Spleen (tissue), 13 donors: ENCODE measurements at regions of chr1 and their contacts with region 1.

Region 1: DNA sequence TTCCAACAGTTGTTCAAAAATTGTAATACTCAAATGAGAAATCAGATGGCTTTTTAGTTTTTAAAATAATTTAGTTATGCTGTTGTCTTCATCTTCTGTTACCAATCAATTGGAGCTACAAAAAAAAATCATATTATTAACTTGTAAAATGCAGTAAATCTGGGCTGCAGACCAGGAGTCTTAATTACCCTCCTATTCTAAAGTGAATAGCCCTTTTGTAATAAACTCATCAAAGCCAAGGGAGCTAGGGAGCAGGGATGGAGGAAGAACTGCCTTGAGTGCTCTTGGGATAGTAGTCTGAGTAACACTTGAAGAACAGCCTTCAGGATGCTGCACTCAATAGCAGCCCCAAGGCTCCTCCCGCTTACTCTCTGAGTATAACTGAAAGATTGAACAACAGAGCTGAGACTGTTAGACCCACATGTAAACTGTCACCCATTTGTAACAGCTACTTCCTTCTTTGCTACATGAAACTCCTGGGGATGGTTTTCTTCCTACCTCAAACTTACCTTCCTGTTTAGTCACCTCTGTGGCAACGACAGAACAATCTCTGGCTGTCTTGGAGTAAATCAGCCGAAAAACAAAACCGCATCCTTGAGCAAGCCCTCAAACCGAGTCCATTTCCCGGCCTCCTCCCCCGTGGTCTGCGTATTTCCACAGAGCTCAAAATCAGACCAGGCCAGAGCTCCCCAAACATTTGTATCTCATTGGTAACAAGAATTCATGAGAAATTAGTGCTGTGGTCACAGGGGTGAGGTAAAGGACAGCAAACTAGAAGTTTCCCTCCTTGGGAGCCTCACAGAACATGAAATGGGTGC is 55.9 kb downstream of the CD58 start:
- DNase-seq: peak; percentile 85
- H3K4me3 ChIP-seq: peak overlapping the region in 1 of 8 donors; percentile 57
- H3K27ac ChIP-seq: peak overlapping the region; percentile 64 to 95 (median 92)
- H3K4me1 ChIP-seq: peaks cover 16 to 76% (median 32%) of the 10 kb centered on the region in 6 donors
- H3K27me3 ChIP-seq: no peaks in the 10 kb centered on the region
- CTCF ChIP-seq: peak in 1 of 11 experiments; percentile 6
- POLR2A ChIP-seq: no peak

Region 2: DNA sequence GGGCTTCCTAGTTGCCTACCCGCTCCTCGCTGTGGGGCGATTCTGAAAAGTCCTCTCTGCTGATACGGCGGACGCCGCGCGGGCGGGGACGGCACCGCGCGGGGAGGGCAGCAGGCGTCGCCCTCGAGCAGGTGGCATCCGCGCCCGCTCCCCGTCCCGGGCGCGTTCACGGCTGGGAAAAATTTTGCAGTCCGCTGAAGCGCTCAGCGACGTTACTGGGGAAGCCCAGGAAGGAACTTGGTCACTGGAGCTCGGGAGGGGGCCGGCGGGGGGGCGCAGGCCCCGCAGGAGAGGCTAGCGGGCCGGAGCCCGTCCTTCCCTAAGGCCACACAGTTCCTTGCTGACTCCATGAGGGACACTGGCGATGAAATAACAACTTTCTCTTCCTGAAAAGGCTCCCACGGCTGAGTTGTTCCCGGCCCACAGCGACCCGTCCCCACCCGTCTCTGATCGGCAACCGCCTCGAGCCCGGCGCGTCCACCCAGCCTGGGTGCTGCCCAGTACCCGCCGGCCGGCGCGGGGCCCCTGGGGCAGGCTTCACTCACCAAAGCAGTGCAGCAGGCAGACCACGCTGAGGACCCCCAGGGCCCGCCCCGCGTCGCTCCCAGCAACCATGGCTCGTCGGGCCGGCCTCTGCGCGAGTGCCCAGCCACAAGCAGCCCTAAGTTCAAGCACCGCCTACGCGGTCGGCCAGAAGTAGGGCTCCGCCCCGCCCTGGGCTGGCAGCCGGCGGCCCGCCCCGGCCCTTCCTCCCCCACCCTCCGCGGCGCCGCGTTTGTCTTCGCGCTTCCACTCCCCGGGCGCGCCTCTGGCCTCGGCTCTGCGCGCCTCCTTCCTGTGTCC is 55.7 kb after region 1 on chr1 and contains the start of gene CD58:
- intact Hi-C with region 1: loop called (anchors 10 kb)
- DNase-seq: peak; percentile 99
- H3K4me3 ChIP-seq: peak within 1 kb of the TSS; percentile 67 to 95 (median 78)
- H3K27ac ChIP-seq: peak within 1 kb of the TSS; percentile 92 to 99 (median 96)
- H3K4me1 ChIP-seq: peaks cover 22 to 87% (median 64%) of the 10 kb centered on the region in 6 donors
- H3K27me3 ChIP-seq: no peaks in the 10 kb centered on the region
- CTCF ChIP-seq: peak in 10 of 11 experiments; percentile 54 to 92 (median 81)
- POLR2A ChIP-seq: peak in 2 of 3 donors; percentile 51 to 79
- total RNA-seq, gene CD58: 25.5 to 52.1 (median 36.2) TPM

Region 3: DNA sequence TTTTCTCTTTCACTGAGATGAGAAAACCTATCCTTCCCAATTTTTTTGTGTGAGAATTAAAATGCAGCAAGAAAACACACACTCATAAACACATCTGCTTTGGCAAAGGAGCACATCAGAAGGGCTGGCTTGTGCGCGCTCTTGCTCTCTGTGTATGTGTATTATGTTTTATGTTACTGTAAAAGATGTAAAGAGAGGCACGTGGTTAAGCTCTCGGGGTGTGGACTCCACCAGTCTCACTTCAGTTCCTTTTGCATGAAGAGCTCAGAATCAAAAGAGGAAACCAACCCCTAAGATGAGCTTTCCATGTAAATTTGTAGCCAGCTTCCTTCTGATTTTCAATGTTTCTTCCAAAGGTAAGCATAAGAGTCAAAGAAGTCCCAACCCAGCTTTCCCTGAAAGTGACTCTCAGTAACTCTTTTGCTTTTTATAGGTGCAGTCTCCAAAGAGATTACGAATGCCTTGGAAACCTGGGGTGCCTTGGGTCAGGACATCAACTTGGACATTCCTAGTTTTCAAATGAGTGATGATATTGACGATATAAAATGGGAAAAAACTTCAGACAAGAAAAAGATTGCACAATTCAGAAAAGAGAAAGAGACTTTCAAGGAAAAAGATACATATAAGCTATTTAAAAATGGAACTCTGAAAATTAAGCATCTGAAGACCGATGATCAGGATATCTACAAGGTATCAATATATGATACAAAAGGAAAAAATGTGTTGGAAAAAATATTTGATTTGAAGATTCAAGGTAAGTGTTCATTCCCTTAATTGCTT is 239.5 kb after region 1 on chr1 and contains the start of gene CD2:
- intact Hi-C with region 1: no loop called
- DNase-seq: no peak
- H3K4me3 ChIP-seq: peak within 1 kb of the TSS; percentile 28 to 65 (median 38)
- H3K27ac ChIP-seq: peak within 1 kb of the TSS; percentile 33 to 82 (median 73)
- H3K4me1 ChIP-seq: peaks cover 0 to 36% (median 10%) of the 10 kb centered on the region in 6 donors
- H3K27me3 ChIP-seq: no peaks in the 10 kb centered on the region
- CTCF ChIP-seq: no peak
- POLR2A ChIP-seq: no peak
- total RNA-seq, gene CD2: 24.4 to 50.5 (median 35.4) TPM